ENCODE measurements at regions of chr16 and their contacts with region 1.

Region 1: DNA sequence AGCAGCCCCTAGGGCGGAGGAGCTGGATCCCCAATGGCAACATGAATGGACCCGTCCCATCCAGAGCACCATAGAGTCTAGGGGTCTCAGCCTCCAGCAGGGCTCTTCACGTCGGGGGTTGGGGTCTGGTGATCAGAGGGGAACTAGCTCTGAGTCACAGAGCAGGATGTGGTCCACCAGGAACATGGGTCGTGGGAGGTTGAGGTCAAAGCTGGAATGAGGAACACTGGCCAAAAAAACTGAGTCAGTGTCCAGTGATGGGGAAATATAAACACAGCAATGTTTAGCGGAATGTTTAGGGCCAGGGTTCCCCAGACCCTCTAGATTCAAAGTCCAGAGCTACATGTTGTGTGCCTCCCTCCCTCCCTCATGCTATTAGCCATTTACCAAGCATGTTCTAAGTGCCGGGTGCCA is 79.1 kb upstream of the C16orf82 start:
- DNase-seq: no peak
- H3K4me3 ChIP-seq: no peak overlapping the region
- H3K27ac ChIP-seq: peak overlapping the region in 1 of 2 donors; percentile 12
- H3K4me1 ChIP-seq: no peaks in the 10 kb centered on the region
- H3K27me3 ChIP-seq: no peaks in the 10 kb centered on the region
- CTCF ChIP-seq: no peak
- POLR2A ChIP-seq: no peak

Region 2: GRCh38 chr16:27005386-27005785 is 17.8 kb after region 1 on chr16:
- intact Hi-C with region 1: loop called (anchors 1 kb)
- DNase-seq: no peak
- H3K4me3 ChIP-seq: no peak overlapping the region
- H3K27ac ChIP-seq: no peak overlapping the region
- H3K4me1 ChIP-seq: no peaks in the 10 kb centered on the region
- H3K27me3 ChIP-seq: no peaks in the 10 kb centered on the region
- CTCF ChIP-seq: no peak
- POLR2A ChIP-seq: no peak

Region 3: DNA sequence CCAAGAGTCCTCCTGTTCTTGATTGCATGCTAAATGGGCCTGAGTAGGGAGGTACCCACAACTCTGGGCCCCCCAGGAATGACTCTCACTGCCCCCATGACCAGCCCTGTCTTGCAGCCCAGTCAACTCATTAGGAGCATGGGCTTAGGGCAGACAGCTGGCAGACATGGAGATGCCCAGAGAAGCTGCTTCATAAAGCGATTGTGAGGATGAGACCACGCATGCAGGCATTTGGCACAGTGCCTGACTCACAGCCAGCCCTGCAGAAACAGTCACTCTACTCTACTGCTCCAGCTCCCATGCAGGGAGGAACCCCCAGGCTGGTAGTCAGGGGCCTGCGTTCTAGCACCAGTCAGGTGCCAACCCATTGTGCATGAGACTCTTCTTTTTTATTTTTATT is 70.7 kb after region 1 on chr16:
- intact Hi-C with region 1: loop called (anchors 2 kb)
- DNase-seq: no peak
- H3K4me3 ChIP-seq: no peak overlapping the region
- H3K27ac ChIP-seq: no peak overlapping the region
- H3K4me1 ChIP-seq: no peaks in the 10 kb centered on the region
- H3K27me3 ChIP-seq: no peaks in the 10 kb centered on the region
- CTCF ChIP-seq: no peak
- POLR2A ChIP-seq: no peak

Region 4: GRCh38 chr16:27999687-28000086 is 1012.1 kb after region 1 on chr16:
- intact Hi-C with region 1: no loop called
- DNase-seq: no peak
- H3K4me3 ChIP-seq: no peak overlapping the region
- H3K27ac ChIP-seq: no peak overlapping the region
- H3K4me1 ChIP-seq: no peaks in the 10 kb centered on the region
- H3K27me3 ChIP-seq: no peaks in the 10 kb centered on the region
- CTCF ChIP-seq: no peak
- POLR2A ChIP-seq: no peak

Measured in breast epithelium (tissue), 4 donors.